Caco-2 (cell line): ENCODE measurements at regions of chr18 and their contacts with region 1.

Region 1: DNA sequence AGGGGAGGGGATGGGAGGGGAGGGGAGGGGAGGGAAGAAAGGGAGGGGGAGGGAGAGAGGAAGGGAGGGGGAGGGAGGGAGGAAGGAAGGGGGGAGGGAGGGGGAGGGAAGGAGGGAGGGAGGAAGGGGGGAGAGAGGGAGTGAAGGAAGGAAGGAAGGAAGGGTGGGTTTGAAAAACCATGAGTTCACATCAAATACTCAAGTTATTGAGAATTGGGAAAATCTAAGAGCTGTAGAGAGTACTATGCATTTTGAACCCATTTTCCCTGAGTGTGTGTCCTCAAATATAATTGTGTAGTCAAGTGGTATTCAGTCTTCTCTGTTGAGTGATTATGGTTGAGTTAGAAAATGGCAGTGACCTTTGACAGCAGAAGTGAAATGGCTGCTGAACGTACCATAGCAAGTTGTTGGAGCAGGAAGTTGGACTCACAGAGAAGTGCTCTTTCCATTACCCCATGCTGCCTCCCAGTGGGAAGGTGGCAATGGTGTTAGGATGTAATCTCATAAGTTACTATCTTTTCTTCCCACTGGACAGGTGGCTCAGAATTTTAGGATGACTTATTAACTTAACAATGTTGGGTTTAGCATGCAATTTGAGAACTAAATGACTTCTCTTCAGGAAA is 214.6 kb downstream of the SETBP1 start:
- DNase-seq: peak; percentile 47 to 53
- H3K4me3 ChIP-seq: no peak overlapping the region
- H3K4me3 Mint-ChIP-seq: no peak overlapping the region
- H3K27ac Mint-ChIP-seq: no peak overlapping the region
- H3K4me1 ChIP-seq: no peaks in the 10 kb centered on the region
- H3K4me1 Mint-ChIP-seq: no peaks in the 10 kb centered on the region
- H3K27me3 ChIP-seq: no peaks in the 10 kb centered on the region
- H3K27me3 Mint-ChIP-seq: no peaks in the 10 kb centered on the region
- CTCF ChIP-seq: peak in 1 of 2 experiments; percentile 18

Region 2: DNA sequence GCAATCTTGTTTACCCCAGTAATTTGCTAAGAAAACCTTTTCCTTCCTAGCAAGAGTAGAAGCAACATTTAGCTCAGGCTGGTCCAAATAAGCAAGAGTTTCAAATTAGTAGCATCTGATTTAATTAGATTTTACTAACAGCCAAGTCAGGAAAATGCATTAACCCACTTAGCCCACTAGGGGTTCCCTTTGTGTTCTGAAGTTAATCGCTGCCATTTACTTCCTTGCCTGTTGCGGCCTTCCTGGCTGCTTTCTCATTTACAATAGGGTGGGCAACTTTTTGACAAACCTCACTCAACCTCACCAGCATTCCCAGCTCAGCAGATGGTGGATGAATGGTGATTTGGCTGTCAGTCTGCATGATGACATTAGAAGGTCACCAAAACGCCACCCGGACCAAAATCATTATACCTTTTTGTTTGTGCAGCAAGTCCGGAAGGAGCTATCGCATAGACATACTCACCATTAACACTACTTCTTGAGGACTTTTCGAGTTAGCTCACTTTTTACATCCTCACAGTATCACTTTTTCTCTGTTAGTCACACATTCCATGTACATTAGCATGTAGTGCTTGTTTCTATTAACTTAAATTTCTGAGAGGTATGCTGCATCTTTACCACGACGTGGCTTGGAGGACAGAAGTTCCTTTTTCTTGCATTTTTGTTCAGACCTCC is 316.1 kb before region 1 on chr18:
- CTCF ChIA-PET with region 1: no interaction called
- POLR2A ChIA-PET with region 1: no interaction called
- intact Hi-C with region 1: loop called (anchors 5 kb)
- DNase-seq: peak in 1 of 2 experiments; percentile 1
- H3K4me3 ChIP-seq: no peak overlapping the region
- H3K4me3 Mint-ChIP-seq: no peak overlapping the region
- H3K27ac Mint-ChIP-seq: no peak overlapping the region
- H3K4me1 ChIP-seq: no peaks in the 10 kb centered on the region
- H3K4me1 Mint-ChIP-seq: no peaks in the 10 kb centered on the region
- H3K27me3 ChIP-seq: no peaks in the 10 kb centered on the region
- H3K27me3 Mint-ChIP-seq: no peaks in the 10 kb centered on the region
- CTCF ChIP-seq: peak; percentile 14 to 39

Region 3: GRCh38 chr18:44679056-44679905 is 216.0 kb before region 1 on chr18:
- CTCF ChIA-PET with region 1: no interaction called
- POLR2A ChIA-PET with region 1: interaction called, 3 read pairs
- intact Hi-C with region 1: loop called (anchors 1 kb)
- DNase-seq: peak; percentile 69 to 71
- H3K4me3 ChIP-seq: peak overlapping the region; percentile 53
- H3K4me3 Mint-ChIP-seq: peak overlapping the region; percentile 63
- H3K27ac Mint-ChIP-seq: no peak overlapping the region
- H3K4me1 ChIP-seq: no peaks in the 10 kb centered on the region
- H3K4me1 Mint-ChIP-seq: no peaks in the 10 kb centered on the region
- H3K27me3 ChIP-seq: no peaks in the 10 kb centered on the region
- H3K27me3 Mint-ChIP-seq: no peaks in the 10 kb centered on the region
- CTCF ChIP-seq: peak; percentile 14 to 53

Region 4: DNA sequence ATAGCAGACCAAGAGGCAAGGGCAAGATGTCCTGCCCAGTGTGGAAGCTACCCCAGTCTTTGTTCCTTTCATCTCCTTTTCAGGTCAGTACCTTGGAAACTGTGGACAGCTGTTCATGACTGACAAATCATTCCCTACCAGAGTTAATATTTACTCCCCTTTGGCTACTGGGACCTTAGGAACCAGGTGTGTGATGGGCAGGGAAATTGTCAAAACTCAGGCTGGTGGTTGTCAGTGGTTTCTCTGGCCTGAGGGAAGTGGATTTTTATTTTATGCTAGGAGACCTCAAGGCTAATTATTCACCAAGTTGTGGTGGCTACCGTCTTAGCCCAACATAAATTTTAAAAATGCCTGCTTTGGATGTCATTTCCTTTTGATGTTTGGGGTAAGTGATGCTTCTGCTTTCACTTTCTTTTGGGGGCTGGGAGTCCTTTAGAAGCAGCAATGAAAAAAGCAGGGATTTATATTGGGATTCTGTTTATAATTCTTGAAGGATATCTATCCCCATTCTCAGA is 95.3 kb before region 1 on chr18:
- CTCF ChIA-PET with region 1: no interaction called
- POLR2A ChIA-PET with region 1: no interaction called
- intact Hi-C with region 1: loop called (anchors 5 kb)
- DNase-seq: no peak
- H3K4me3 ChIP-seq: no peak overlapping the region
- H3K4me3 Mint-ChIP-seq: no peak overlapping the region
- H3K27ac Mint-ChIP-seq: no peak overlapping the region
- H3K4me1 ChIP-seq: peaks cover 66% of the 10 kb centered on the region
- H3K4me1 Mint-ChIP-seq: peaks cover 39% of the 10 kb centered on the region
- H3K27me3 ChIP-seq: no peaks in the 10 kb centered on the region
- H3K27me3 Mint-ChIP-seq: no peaks in the 10 kb centered on the region
- CTCF ChIP-seq: no peak